Common myeloid progenitor, CD34-positive (primary cell): ENCODE measurements at regions of chr11 and their contacts with region 1.

Region 1: DNA sequence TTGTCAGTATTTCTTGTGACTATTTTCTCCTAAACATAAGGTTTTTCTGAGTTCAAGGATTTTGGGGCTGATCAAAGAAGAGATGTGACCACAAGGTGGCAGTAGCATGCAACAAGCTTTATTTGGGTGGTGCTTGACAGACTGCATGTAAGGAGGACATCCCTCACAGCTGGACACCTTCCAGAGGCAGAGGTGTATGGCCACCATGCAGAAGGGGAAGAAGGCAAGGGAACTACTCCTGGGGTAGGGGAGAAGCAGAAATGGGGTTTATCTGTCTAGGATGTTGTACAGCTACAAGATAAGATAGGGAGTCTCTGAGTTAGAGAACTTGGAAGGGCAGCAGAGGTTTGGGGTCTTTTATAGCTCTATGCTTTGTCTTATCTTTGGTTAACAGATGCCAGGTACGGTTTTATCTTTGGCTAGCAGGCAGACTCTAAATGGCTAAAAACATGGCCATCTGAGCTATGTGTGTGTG is 5.1 kb upstream of the BIRC2 start:
- DNase-seq: peak; percentile 95 to 98 (median 96)
- H3K4me3 ChIP-seq: no peak overlapping the region
- H3K27ac ChIP-seq: peak overlapping the region in 1 of 2 experiments; percentile 45
- H3K4me1 ChIP-seq: peaks cover 8 to 18% (median 15%) of the 10 kb centered on the region in 4 experiments
- H3K27me3 ChIP-seq: no peaks in the 10 kb centered on the region

Region 2: DNA sequence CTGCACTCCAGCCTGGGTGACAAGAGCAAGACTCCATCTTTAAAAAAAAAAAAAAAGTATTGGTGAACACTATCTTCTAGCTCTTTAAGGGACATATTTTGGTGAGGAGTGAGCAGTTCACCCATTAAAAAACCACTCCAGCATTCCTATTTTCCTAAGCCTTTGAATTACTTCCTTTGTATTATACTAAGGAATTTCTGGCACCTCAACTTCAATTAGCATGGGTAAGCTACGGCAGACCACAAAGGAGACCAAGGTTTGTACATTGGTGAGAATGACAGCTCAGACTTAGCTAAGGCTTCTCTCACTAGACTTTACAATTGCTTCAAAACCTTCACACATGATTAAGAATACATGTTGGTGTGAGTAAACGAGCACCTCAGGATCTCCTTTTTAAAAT is 81.6 kb before region 1 on chr11:
- CTCF ChIA-PET with region 1: no interaction called
- POLR2A ChIA-PET with region 1: no interaction called
- DNase-seq: no peak
- H3K4me3 ChIP-seq: no peak overlapping the region
- H3K27ac ChIP-seq: no peak overlapping the region
- H3K4me1 ChIP-seq: no peaks in the 10 kb centered on the region
- H3K27me3 ChIP-seq: peaks cover 0 to 9% (median 3%) of the 10 kb centered on the region in 5 experiments

Region 3: GRCh38 chr11:102287964-102288724 is 53.7 kb before region 1 on chr11:
- CTCF ChIA-PET with region 1: interaction called, 23 read pairs
- POLR2A ChIA-PET with region 1: interaction called, 9 read pairs
- DNase-seq: peak; percentile 76 to 82 (median 82)
- H3K4me3 ChIP-seq: peak overlapping the region in 6 of 7 experiments; percentile 7 to 79 (median 46)
- H3K27ac ChIP-seq: no peak overlapping the region
- H3K4me1 ChIP-seq: peaks cover 4 to 26% (median 14%) of the 10 kb centered on the region in 4 experiments
- H3K27me3 ChIP-seq: no peaks in the 10 kb centered on the region

Region 4: GRCh38 chr11:102317099-102317767 is 24.6 kb before region 1 on chr11 and contains the start of gene BIRC3:
- CTCF ChIA-PET with region 1: interaction called, 15 read pairs
- POLR2A ChIA-PET with region 1: interaction called, 7 read pairs
- DNase-seq: peak; percentile 99 to 100 (median 100)
- H3K4me3 ChIP-seq: peak within 1 kb of the TSS; percentile 52 to 88 (median 73)
- H3K27ac ChIP-seq: peak within 1 kb of the TSS; percentile 82 to 91
- H3K4me1 ChIP-seq: peaks cover 25 to 62% (median 41%) of the 10 kb centered on the region in 4 experiments
- H3K27me3 ChIP-seq: no peaks in the 10 kb centered on the region

Region 5: GRCh38 chr11:102367364-102367763 is 25.5 kb after region 1 on chr11:
- CTCF ChIA-PET with region 1: interaction called, 20 read pairs
- POLR2A ChIA-PET with region 1: no interaction called
- DNase-seq: peak; percentile 38 to 68 (median 61)
- H3K4me3 ChIP-seq: no peak overlapping the region
- H3K27ac ChIP-seq: no peak overlapping the region
- H3K4me1 ChIP-seq: no peaks in the 10 kb centered on the region
- H3K27me3 ChIP-seq: no peaks in the 10 kb centered on the region

Region 6: GRCh38 chr11:102666331-102666957 is 324.6 kb after region 1 on chr11:
- CTCF ChIA-PET with region 1: interaction called, 12 read pairs
- POLR2A ChIA-PET with region 1: no interaction called
- DNase-seq: peak; percentile 41 to 56 (median 53)
- H3K4me3 ChIP-seq: no peak overlapping the region
- H3K27ac ChIP-seq: no peak overlapping the region
- H3K4me1 ChIP-seq: no peaks in the 10 kb centered on the region
- H3K27me3 ChIP-seq: no peaks in the 10 kb centered on the region